ENCODE measurements at regions of chr11 and their contacts with region 1.

Region 1: DNA sequence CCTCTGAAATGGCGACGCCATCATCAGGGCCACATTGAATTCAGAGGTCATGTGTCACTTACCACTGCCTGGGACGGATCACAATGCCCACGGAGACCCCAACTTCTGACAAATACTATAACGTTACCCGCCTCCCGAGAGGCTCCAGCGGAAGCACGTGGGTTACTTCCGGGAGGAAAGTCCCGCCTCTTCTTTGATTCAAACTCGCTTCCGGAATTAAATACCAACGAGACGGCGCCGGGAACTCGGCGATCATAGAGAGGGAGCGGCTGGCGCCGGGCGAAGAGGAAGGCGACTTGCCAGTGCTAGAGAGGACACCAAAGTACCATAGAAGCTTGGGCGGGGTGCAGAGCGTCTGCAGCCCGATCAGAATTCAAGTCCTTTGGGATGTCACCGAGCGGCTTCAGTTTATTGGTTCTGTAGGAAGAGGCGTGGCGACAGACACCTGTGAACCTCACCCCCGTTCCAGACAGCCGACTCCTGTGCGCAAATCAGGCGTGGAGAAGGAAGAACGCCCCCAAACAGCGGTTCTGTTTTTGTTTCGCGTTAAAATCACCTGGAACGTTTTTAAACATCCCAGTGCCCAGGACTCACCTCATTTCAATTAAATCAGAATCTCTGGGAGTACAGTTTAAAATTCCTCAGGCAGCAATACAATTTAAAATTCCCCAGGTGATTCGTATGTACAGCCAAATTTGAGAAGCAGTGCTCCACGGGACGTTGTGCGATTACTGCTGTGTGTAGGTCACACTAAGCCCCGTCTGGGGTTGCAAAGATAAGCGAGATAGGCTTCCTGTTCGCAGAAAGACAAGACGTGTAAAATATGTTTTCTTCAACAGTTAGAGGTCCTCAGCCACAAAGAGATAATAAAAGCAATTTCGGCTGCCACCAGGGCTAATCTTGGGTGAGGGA is at the start of gene TIMM10:
- DNase-seq: peak; percentile 86 to 98 (median 92)
- ATAC-seq: peak; percentile 92
- H3K4me3 ChIP-seq: peak within 1 kb of the TSS; percentile 70 to 74
- H3K4me3 Mint-ChIP-seq: peak within 1 kb of the TSS; percentile 88
- H3K27ac ChIP-seq: peak within 1 kb of the TSS; percentile 77 to 87
- H3K27ac Mint-ChIP-seq: peak within 1 kb of the TSS; percentile 94
- H3K4me1 ChIP-seq: peaks cover 19% of the 10 kb centered on the region
- H3K4me1 Mint-ChIP-seq: peaks cover 39% of the 10 kb centered on the region
- H3K27me3 ChIP-seq: no peaks in the 10 kb centered on the region
- H3K27me3 Mint-ChIP-seq: no peaks in the 10 kb centered on the region
- CTCF ChIP-seq: no peak
- total RNA-seq, gene TIMM10: 16.4 to 18.9 TPM

Region 2: GRCh38 chr11:57426929-57427726 is 103.7 kb before region 1 on chr11 and contains the start of gene SLC43A3:
- CTCF ChIA-PET with region 1: interaction called, 8 read pairs
- POLR2A ChIA-PET with region 1: no interaction called
- intact Hi-C with region 1: loop called in 1 of 2 experiments (anchors 1 kb)
- DNase-seq: peak in 8 of 9 experiments; percentile 46 to 80 (median 64)
- ATAC-seq: peak; percentile 32
- H3K4me3 ChIP-seq: peak within 1 kb of the TSS; percentile 47 to 63
- H3K4me3 Mint-ChIP-seq: peak within 1 kb of the TSS; percentile 86
- H3K27ac ChIP-seq: peak within 1 kb of the TSS in 1 of 2 experiments; percentile 85
- H3K27ac Mint-ChIP-seq: peak within 1 kb of the TSS; percentile 89
- H3K4me1 ChIP-seq: peaks cover 31% of the 10 kb centered on the region
- H3K4me1 Mint-ChIP-seq: peaks cover 46% of the 10 kb centered on the region
- H3K27me3 ChIP-seq: no peaks in the 10 kb centered on the region
- H3K27me3 Mint-ChIP-seq: no peaks in the 10 kb centered on the region
- CTCF ChIP-seq: no peak
- total RNA-seq, gene SLC43A3: 9.3 to 11.3 TPM

Region 3: GRCh38 chr11:57493507-57494503 is 37.0 kb before region 1 on chr11:
- CTCF ChIA-PET with region 1: interaction called, 755 read pairs
- POLR2A ChIA-PET with region 1: interaction called, 18 read pairs
- intact Hi-C with region 1: loop called (anchors 1 kb)
- DNase-seq: peak; percentile 57 to 85 (median 76)
- ATAC-seq: peak; percentile 97
- H3K4me3 ChIP-seq: no peak overlapping the region
- H3K4me3 Mint-ChIP-seq: no peak overlapping the region
- H3K27ac ChIP-seq: no peak overlapping the region
- H3K27ac Mint-ChIP-seq: no peak overlapping the region
- H3K4me1 ChIP-seq: no peaks in the 10 kb centered on the region
- H3K4me1 Mint-ChIP-seq: no peaks in the 10 kb centered on the region
- H3K27me3 ChIP-seq: no peaks in the 10 kb centered on the region
- H3K27me3 Mint-ChIP-seq: peaks cover 2% of the 10 kb centered on the region
- CTCF ChIP-seq: peak; percentile 91

Region 4: DNA sequence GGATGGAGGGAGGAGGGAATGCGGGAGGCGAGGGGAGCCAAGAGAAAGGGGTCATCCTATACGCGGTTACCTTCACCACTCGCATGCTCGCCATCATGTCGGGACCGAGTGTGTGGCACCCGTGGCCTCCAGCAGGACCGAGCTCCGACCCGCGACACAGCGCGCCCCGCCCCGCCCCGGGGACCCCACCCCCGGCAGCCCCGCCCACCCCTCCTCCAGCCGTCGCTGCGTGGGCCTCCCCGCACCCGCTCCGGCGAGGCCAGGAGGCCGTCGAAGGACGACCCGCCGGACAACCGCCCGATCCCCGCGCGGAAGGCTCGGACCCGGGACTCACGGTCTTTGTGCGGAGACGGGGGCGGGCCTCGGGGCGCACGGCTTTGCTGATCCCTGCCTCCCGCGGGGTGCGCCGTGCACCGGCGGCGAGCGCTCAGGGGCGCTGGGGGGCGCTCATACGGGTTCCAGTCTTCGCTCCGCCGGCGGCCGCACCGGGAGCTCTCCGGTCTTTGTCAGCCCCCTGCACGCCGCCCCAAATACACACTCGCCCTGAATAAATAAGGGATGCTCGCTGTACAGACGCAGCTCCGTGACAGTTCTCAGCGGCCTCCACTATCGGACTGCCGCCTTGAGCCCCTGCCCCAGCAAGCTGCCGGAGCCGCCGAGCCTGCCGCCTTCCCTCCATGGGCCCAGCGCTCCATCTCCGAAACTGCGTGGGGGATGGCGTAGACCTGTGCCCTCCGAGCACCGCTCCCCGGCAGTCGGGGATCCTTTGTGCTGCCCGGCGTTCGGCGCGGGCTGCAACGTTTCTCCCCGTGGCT is 36.9 kb after region 1 on chr11 and contains the start of gene UBE2L6:
- CTCF ChIA-PET with region 1: interaction called, 10 read pairs
- POLR2A ChIA-PET with region 1: interaction called, 4 read pairs
- intact Hi-C with region 1: loop called (anchors 1 kb)
- DNase-seq: peak; percentile 29 to 92 (median 79)
- ATAC-seq: peak; percentile 77
- H3K4me3 ChIP-seq: peak within 1 kb of the TSS; percentile 86
- H3K4me3 Mint-ChIP-seq: peak within 1 kb of the TSS; percentile 100
- H3K27ac ChIP-seq: peak within 1 kb of the TSS; percentile 86 to 87
- H3K27ac Mint-ChIP-seq: peak within 1 kb of the TSS; percentile 99
- H3K4me1 ChIP-seq: peaks cover 20% of the 10 kb centered on the region
- H3K4me1 Mint-ChIP-seq: peaks cover 48% of the 10 kb centered on the region
- H3K27me3 ChIP-seq: no peaks in the 10 kb centered on the region
- H3K27me3 Mint-ChIP-seq: no peaks in the 10 kb centered on the region
- CTCF ChIP-seq: peak; percentile 93
- total RNA-seq, gene UBE2L6: 44.4 to 47.2 TPM

Region 5: DNA sequence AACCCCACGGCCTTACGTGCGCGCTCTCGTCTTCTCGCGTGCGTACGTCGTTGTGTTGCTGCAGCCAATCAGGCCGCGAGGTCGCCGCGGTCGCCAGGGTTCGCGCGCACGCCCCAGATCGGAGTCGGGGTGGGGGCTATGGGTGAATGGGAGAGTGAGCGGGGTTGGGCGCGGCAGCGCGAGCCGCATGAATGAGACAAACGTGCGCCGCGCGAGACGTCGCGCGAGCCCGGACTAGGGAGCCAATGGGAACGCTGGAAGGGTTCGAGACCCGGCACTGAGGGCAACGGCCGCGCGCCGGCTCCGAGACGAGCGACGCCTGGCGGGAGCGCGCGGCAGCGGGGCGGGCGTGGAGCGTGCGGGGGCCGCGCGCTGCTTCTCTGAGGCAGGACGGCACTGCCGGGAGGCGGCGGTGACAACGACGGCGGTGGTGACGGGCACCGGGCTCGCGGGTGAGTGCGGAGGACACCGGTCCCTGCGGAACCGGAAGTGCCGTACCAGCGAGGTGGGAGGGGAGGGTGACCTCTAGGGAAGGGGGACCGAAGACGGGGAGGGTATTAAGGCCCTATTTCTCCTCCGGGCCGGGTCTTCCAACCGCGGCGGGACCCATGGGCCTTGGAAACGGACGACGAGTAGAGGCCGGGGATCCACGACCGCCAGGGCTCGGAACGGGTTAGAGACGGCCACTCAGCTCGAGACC is 137.0 kb after region 1 on chr11 and contains the start of gene ZDHHC5:
- CTCF ChIA-PET with region 1: interaction called, 5 read pairs
- POLR2A ChIA-PET with region 1: no interaction called
- intact Hi-C with region 1: loop called in 1 of 2 experiments (anchors 1 kb)
- DNase-seq: peak; percentile 99 to 100 (median 99)
- ATAC-seq: peak; percentile 85
- H3K4me3 ChIP-seq: peak within 1 kb of the TSS; percentile 83 to 96
- H3K4me3 Mint-ChIP-seq: peak within 1 kb of the TSS; percentile 85
- H3K27ac ChIP-seq: peak within 1 kb of the TSS; percentile 91 to 99
- H3K27ac Mint-ChIP-seq: peak within 1 kb of the TSS; percentile 97
- H3K4me1 ChIP-seq: peaks cover 41% of the 10 kb centered on the region
- H3K4me1 Mint-ChIP-seq: peaks cover 56% of the 10 kb centered on the region
- H3K27me3 ChIP-seq: no peaks in the 10 kb centered on the region
- H3K27me3 Mint-ChIP-seq: no peaks in the 10 kb centered on the region
- CTCF ChIP-seq: peak; percentile 31
- total RNA-seq, gene ZDHHC5: 65.0 to 66.7 TPM

Region 6: GRCh38 chr11:59142530-59143507 is 1612.0 kb after region 1 on chr11 and contains the start of gene FAM111A:
- CTCF ChIA-PET with region 1: no interaction called
- POLR2A ChIA-PET with region 1: no interaction called
- intact Hi-C with region 1: loop called in 1 of 2 experiments (anchors 1 kb)
- DNase-seq: peak; percentile 58 to 95 (median 87)
- ATAC-seq: peak; percentile 83
- H3K4me3 ChIP-seq: peak within 1 kb of the TSS; percentile 84 to 95
- H3K4me3 Mint-ChIP-seq: peak within 1 kb of the TSS; percentile 98
- H3K27ac ChIP-seq: peak within 1 kb of the TSS; percentile 81 to 95
- H3K27ac Mint-ChIP-seq: peak within 1 kb of the TSS; percentile 97
- H3K4me1 ChIP-seq: peaks cover 31% of the 10 kb centered on the region
- H3K4me1 Mint-ChIP-seq: peaks cover 54% of the 10 kb centered on the region
- H3K27me3 ChIP-seq: no peaks in the 10 kb centered on the region
- H3K27me3 Mint-ChIP-seq: no peaks in the 10 kb centered on the region
- CTCF ChIP-seq: peak; percentile 45
- total RNA-seq, gene FAM111A: 23.3 to 33.4 TPM